ENCODE measurements at regions of chr3 and their contacts with region 1.

Region 1: GRCh38 chr3:8501371-8502131 is at the start of gene LMCD1:
- DNase-seq: peak; percentile 94
- H3K4me3 ChIP-seq: peak within 1 kb of the TSS; percentile 68 to 71
- H3K27ac ChIP-seq: peak within 1 kb of the TSS; percentile 88 to 98
- H3K4me1 ChIP-seq: peaks cover 24 to 53% of the 10 kb centered on the region in 2 experiments
- H3K27me3 ChIP-seq: no peaks in the 10 kb centered on the region
- CTCF ChIP-seq: peak; percentile 28
- EP300 ChIP-seq: peak in 1 of 2 experiments; percentile 33; a peak in 1 of 4 replicates
- RAD21 ChIP-seq: no peak
- polyA plus RNA-seq, gene LMCD1: 23.6 and 26.5 TPM in 2 replicates

Region 2: DNA sequence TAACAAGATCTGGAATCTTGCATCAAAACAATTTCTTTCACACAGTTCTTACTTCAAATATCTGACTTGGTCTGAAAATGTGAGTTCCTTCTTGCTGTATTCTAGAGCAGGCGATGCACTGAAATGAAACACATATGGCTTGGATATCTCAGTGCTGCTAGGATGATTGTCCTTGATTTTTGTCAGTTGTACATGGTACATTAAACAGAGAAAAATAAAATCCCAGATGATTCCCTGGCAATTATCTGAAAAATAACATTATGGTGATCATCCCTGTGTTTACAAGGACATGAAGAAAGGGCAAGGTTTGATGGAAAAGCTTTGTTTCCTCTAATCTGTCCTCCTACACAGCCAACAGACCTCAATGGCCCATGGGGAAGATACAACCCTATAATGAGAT is 10.7 kb after region 1 on chr3:
- CTCF ChIA-PET with region 1: interaction called, 4 read pairs
- POLR2A ChIA-PET with region 1: interaction called, 11 read pairs
- DNase-seq: peak; percentile 39
- H3K4me3 ChIP-seq: no peak overlapping the region
- H3K27ac ChIP-seq: peak overlapping the region in 1 of 2 experiments; percentile 64; a peak in 2 of 4 replicates
- H3K4me1 ChIP-seq: peaks cover under 1 to 15% of the 10 kb centered on the region in 2 experiments; a peak in 2 of 4 replicates
- H3K27me3 ChIP-seq: no peaks in the 10 kb centered on the region
- CTCF ChIP-seq: no peak
- EP300 ChIP-seq: peak in 1 of 2 experiments; percentile 70; a peak in 1 of 4 replicates
- RAD21 ChIP-seq: no peak

Region 3: DNA sequence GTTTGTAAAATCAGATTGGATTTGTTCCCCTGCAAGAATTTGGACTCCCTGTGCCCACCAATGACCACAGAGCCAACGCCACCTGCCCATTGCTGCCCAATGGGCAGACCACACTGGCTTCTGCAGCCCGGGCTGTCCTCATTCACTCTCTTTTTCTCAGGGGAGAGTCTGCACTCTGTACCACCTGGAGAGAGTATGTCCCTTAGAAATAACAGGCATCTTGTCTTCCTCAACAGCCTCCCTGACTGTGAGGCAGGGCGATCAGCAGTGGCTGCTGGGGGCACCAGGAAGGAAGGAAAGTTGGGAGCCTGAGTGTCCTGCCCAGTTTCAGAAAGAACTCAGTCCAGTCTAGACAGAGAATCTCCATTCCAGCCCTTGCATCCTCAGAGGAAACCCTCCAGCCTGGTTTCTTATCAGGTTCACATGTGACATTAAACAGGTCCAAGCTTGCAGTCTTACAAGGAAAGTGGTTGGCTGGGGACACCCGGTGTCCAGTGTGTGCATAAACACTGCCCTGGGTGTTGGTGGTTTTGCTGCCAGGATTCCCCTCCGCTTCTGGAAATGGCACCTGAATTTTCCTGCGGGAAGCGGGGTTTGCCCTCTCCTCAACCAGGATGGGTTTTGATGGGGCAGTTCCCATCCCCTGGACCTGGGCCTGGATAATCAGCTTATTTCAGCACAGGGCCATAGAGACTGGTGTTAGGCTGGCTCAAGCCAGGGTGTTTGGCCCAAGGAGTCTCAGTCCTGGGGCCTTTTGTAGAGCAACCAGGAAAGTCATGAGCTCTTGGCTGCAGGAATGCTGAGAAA is 105.9 kb after region 1 on chr3:
- CTCF ChIA-PET with region 1: interaction called, 13 read pairs
- POLR2A ChIA-PET with region 1: interaction called, 7 read pairs
- DNase-seq: peak; percentile 82
- H3K4me3 ChIP-seq: no peak overlapping the region
- H3K27ac ChIP-seq: peak overlapping the region in 1 of 2 experiments; percentile 97; a peak in 2 of 4 replicates
- H3K4me1 ChIP-seq: peaks cover 5 to 44% of the 10 kb centered on the region in 2 experiments; a peak in 3 of 4 replicates
- H3K27me3 ChIP-seq: no peaks in the 10 kb centered on the region
- CTCF ChIP-seq: peak; percentile 66
- EP300 ChIP-seq: peak in 1 of 2 experiments; percentile 78; a peak in 2 of 4 replicates
- RAD21 ChIP-seq: peak; percentile 96

Region 4: GRCh38 chr3:8622873-8623691 is 121.5 kb after region 1 on chr3:
- CTCF ChIA-PET with region 1: interaction called, 22 read pairs
- POLR2A ChIA-PET with region 1: interaction called, 3 read pairs
- DNase-seq: peak; percentile 93
- H3K4me3 ChIP-seq: no peak overlapping the region; a peak in 1 of 4 replicates
- H3K27ac ChIP-seq: peak overlapping the region in 1 of 2 experiments; percentile 68; a peak in 2 of 4 replicates
- H3K4me1 ChIP-seq: peaks cover 0 to 26% of the 10 kb centered on the region in 2 experiments; a peak in 1 of 4 replicates
- H3K27me3 ChIP-seq: no peaks in the 10 kb centered on the region
- CTCF ChIP-seq: peak; percentile 94
- EP300 ChIP-seq: no peak
- RAD21 ChIP-seq: peak; percentile 93

Region 5: GRCh38 chr3:8650583-8651416 is 149.2 kb after region 1 on chr3:
- CTCF ChIA-PET with region 1: no interaction called
- POLR2A ChIA-PET with region 1: interaction called, 10 read pairs
- DNase-seq: peak; percentile 80
- H3K4me3 ChIP-seq: peak overlapping the region; percentile 9 to 38; a peak in 3 of 4 replicates
- H3K27ac ChIP-seq: peak overlapping the region; percentile 50 to 100; a peak in 3 of 4 replicates
- H3K4me1 ChIP-seq: peaks cover 12 to 62% of the 10 kb centered on the region in 2 experiments
- H3K27me3 ChIP-seq: no peaks in the 10 kb centered on the region
- CTCF ChIP-seq: no peak
- EP300 ChIP-seq: peak; percentile 63 to 97; a peak in 3 of 4 replicates
- RAD21 ChIP-seq: no peak; the same call in none of the 2 replicates